Naive thymus-derived CD8-positive, alpha-beta T cell (primary cell): ENCODE measurements at regions of chr11 and their contacts with region 1.

Region 1: DNA sequence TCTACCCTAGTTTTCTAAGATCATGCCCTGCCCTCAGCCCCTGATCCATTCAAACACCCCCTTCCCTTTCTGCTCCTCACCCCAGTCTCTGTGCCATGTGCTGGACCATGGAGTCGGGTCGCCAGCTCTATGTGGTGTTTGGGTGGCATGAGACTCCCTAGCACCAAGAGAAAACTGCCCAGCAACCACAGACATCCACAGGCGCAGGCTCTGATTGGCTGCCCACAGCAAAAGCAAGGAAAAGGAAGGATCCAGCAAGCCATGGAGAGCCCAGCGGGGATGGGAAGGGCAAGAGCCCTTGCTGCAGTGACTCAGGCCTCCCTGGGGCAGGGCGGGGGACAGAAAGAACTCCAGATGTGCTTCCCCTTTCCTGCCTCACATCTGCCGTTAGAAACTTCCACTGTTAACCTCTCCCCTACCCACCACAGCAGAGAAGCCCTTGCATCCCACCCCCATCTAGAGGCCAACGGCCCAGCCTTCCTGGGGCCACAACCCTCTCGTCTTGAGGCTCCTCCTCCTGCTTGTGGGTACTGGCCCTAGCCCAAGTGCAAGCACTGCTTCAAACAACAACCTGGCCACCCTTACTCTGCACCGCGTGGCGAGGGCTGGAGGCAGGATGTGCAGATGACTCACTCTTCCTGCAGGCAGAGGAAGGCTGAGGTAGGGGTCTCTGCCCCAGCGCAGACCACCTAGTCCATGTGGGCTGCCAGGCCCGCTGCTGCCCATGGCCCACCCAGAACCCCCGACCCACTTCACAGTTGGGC is 9.7 kb upstream of the AHNAK start:
- DNase-seq: peak; percentile 57 to 94 (median 80)
- ATAC-seq: peak; percentile 50 to 56
- H3K4me3 Mint-ChIP-seq: peak overlapping the region; percentile 61 to 90 (median 86)
- H3K27ac Mint-ChIP-seq: peak overlapping the region; percentile 97 to 100 (median 99)
- H3K4me1 Mint-ChIP-seq: peaks cover 50 to 98% (median 88%) of the 10 kb centered on the region in 4 donors
- H3K27me3 Mint-ChIP-seq: peaks cover 0 to 2% (median 0%) of the 10 kb centered on the region in 5 donors

Region 2: GRCh38 chr11:62400760-62401159 is 155.5 kb before region 1 on chr11:
- POLR2A ChIA-PET with region 1: interaction called, 14 read pairs
- DNase-seq: no peak
- ATAC-seq: no peak
- H3K4me3 Mint-ChIP-seq: peak overlapping the region in 9 of 10 donors; percentile 19 to 96 (median 83)
- H3K27ac Mint-ChIP-seq: peak overlapping the region in 9 of 10 donors; percentile 59 to 98 (median 91)
- H3K4me1 Mint-ChIP-seq: peaks cover 35 to 67% (median 59%) of the 10 kb centered on the region in 4 donors
- H3K27me3 Mint-ChIP-seq: no peaks in the 10 kb centered on the region

Region 3: GRCh38 chr11:62427630-62428233 is 128.6 kb before region 1 on chr11:
- POLR2A ChIA-PET with region 1: interaction called, 24 read pairs
- DNase-seq: no peak
- ATAC-seq: no peak
- H3K4me3 Mint-ChIP-seq: peak overlapping the region in 2 of 10 donors; percentile 26 to 63
- H3K27ac Mint-ChIP-seq: peak overlapping the region in 8 of 10 donors; percentile 53 to 90 (median 78)
- H3K4me1 Mint-ChIP-seq: peaks cover 11 to 48% (median 39%) of the 10 kb centered on the region in 4 donors
- H3K27me3 Mint-ChIP-seq: no peaks in the 10 kb centered on the region

Region 4: DNA sequence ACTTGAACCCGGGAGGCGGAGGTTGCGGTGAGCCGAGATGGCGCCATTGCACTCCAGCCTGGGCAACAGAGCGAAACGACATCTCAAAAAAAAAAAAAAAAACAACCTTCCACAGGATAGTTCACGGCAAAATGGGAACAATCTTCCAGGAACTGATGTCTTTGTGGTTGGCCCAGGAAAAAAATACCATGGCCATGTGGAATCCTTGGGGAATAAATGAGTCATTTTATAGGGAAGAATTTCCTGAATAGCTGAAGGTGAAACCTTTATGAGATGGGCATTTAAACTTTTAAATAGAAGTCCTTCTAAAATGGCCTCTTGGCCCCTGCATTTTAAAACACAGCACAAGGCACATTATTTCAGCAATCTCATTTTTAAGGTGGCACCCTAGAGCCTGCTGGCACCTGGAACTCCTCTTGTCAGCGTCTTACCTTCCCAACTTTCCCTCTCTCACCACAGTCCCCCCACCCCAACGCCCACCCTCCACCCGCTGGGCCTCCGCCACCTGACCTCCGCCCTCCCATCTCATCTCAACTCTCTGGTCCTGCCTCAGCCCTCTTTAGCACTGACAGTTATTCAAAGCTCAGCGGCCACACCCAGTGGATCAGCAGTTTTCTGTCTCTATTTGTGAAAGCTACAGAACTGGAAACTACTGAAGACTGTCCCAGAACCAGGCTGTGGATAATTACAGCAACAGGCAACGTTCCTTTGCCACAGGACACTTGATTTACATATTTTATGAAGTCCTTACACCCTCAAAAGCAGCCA is 94.4 kb before region 1 on chr11:
- POLR2A ChIA-PET with region 1: no interaction called
- DNase-seq: no peak
- ATAC-seq: no peak
- H3K4me3 Mint-ChIP-seq: no peak overlapping the region
- H3K27ac Mint-ChIP-seq: no peak overlapping the region
- H3K4me1 Mint-ChIP-seq: peaks cover 0 to 16% (median 1%) of the 10 kb centered on the region in 4 donors
- H3K27me3 Mint-ChIP-seq: no peaks in the 10 kb centered on the region

Region 5: GRCh38 chr11:62542750-62543567 is 13.3 kb before region 1 on chr11:
- POLR2A ChIA-PET with region 1: interaction called, 207 read pairs
- DNase-seq: peak; percentile 49 to 80 (median 71)
- ATAC-seq: peak; percentile 28 to 39
- H3K4me3 Mint-ChIP-seq: peak overlapping the region; percentile 62 to 95 (median 92)
- H3K27ac Mint-ChIP-seq: peak overlapping the region; percentile 68 to 99 (median 88)
- H3K4me1 Mint-ChIP-seq: peaks cover 40 to 79% (median 74%) of the 10 kb centered on the region in 4 donors
- H3K27me3 Mint-ChIP-seq: no peaks in the 10 kb centered on the region

Region 6: DNA sequence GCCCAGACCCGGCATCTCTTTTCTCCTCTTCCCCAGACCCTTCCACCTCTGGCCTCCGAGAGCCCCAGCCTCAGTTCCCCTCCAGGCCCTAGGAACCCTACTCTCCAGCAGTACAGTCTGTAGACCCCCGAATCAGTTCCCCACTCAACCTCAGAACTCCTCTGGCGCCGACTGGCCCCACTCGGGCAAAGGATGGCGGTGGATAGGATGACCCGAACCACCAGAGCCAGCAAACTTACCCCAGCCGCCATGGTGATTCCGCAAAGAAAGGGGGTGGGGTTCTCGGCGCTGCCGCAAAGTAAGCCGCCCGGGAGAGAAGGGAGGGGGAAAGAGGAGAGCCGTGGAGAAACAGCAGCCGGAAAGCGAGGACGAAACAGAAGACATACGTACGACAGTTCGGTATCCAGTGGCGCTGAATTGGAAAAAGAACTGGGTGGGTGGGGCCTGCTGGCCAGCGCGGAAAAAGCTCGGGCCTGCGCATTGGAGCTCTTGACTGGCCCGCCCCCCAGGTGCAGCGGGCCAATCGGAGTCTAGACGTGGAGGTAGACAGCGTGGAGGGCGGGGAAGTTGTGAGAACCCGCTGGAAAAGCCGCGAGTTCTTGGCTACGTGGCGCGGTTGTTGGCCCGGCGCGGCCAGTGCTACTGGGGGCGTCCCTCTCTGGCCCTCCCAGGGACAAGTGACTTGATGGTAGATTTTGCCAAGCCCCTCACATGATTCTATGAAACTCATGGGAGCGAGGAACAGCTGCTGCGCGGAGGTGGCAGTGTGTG is 17.5 kb after region 1 on chr11 and contains the start of gene EEF1G:
- POLR2A ChIA-PET with region 1: interaction called, 30 read pairs
- DNase-seq: peak; percentile 94 to 100 (median 98)
- ATAC-seq: peak; percentile 91 to 92
- H3K4me3 Mint-ChIP-seq: peak within 1 kb of the TSS; percentile 93 to 99 (median 97)
- H3K27ac Mint-ChIP-seq: peak within 1 kb of the TSS; percentile 90 to 99 (median 98)
- H3K4me1 Mint-ChIP-seq: peaks cover 41 to 59% (median 53%) of the 10 kb centered on the region in 4 donors
- H3K27me3 Mint-ChIP-seq: no peaks in the 10 kb centered on the region
- polyA plus RNA-seq, gene EEF1G: 1,637 to 2,152 (median 1,960) TPM